Sciatic nerve (tissue), 2 donors: ENCODE measurements at regions of chr7 and their contacts with region 1.

Region 1: DNA sequence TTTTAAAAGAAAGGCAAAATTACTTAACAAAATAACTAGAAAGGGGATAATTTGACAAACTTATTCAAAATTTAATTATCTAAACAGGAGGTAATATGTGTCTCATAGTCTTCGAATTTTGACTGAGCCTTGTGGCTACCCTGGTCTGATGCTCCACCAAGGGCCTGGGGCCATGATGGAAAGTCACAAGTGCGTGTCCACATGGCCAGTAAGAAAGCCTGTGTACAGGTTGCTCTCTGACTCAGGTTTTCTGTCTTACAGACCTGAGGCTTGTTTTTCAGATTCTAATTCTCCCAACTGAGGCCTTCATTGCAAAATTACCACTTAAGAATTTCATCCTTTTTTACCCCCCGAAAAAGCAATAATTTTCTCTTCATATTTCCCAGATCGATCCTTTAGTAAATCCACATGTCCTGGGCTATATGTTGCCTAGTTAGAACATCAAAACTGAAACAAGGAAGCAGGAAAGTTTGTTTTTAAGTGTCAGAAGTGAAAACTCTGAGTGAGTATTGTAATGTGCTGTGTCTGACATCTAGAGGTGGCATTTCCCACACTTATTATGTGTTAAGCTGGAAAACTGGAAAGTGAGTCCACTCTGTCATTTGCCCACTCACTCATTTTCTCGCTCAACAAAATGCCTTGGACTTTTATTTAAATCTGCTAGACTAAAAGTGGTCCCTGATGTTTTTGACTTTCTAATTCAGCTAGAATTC is 10.0 kb downstream of the CYP3A43 start:
- DNase-seq: no peak
- ATAC-seq: peak; percentile 67

Region 2: DNA sequence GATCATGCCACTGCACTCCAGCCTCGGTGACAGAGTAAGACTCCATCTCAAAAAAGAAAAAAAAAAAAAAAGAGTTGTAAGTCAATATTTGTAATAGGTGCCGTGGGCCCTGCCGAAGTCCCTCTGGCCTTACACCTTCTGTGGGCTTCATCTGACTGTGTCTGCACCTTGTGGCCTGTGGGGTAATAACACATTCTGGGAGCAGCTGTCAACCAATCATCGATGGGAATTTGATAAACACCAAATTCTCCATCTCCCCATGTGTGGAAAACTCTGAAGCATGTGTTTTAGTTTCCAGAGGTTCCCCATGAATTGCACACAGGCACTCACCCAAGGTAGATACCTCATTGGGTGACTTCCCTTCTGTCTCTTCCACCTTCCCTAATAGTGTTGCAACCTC is 348.6 kb before region 1 on chr7:
- intact Hi-C with region 1: loop called (anchors 5 kb)
- DNase-seq: no peak
- ATAC-seq: no peak